H1 (cell line): ENCODE measurements at regions of chr16 and their contacts with region 1.

Region 1: GRCh38 chr16:57648590-57649442 is 19.3 kb upstream of the ADGRG3 start:
- DNase-seq: peak; percentile 65 to 98
- H3K4me3 ChIP-seq: no peak overlapping the region
- H3K27ac ChIP-seq: no peak overlapping the region
- H3K4me1 ChIP-seq: peaks cover 0 to under 1% (median 0%) of the 10 kb centered on the region in 4 experiments; a peak in 3 of 7 replicates
- H3K27me3 ChIP-seq: 0 out of 7 replicates have a peak, but pooled peaks cover 0 to 3% (median 0%) of the 10 kb centered on the region in 4 experiments
- CTCF ChIP-seq: peak; percentile 100
- EP300 ChIP-seq: no peak
- POLR2A ChIP-seq: no peak
- RAD21 ChIP-seq: peak; percentile 99

Region 2: DNA sequence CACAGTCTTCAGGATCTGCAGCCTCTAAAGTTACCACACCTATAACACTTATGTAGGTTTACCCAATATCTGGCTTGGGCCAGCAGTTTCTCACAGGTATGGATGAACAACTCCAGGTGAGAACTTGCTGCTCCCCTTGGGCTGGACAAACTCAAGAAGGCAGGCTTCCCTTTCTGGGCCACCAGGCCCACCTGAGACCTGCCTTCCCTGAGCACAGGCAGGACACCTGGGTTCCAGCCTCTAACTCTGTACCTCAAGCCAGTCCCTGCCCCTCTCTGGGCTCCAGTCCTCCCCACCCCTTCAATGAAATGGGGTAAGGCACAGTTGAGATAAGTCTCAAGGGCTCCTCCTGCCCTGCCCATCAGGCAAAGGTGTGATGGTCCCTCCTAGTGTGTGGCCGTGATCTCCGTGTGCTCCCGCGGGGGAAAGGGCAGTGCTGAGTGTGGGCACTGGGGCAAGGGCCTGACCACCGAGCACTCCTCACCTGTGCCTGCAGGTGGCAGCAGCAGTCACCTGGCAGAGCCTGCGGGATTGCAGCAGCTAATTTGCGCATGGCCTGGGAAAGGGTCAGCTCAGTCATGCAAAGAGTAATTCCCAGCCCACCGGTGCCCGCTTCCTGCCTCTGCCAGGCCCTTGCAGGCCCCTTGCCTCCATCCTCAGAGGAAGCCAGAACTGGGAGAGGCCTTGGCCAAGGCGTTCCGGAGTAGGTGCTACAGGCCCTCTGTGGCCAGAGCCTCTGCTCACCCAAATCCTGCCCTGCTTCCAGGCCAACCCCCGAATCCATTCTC is 48.6 kb before region 1 on chr16:
- CTCF ChIA-PET with region 1: interaction called, 122 read pairs
- POLR2A ChIA-PET with region 1: no interaction called
- DNase-seq: peak; percentile 59 to 87
- H3K4me3 ChIP-seq: no peak overlapping the region
- H3K27ac ChIP-seq: no peak overlapping the region
- H3K4me1 ChIP-seq: no peaks in the 10 kb centered on the region; a peak in 1 of 7 replicates
- H3K27me3 ChIP-seq: no peaks in the 10 kb centered on the region; a peak in 1 of 7 replicates
- CTCF ChIP-seq: peak; percentile 95 to 100 (median 99)
- EP300 ChIP-seq: no peak
- POLR2A ChIP-seq: no peak
- RAD21 ChIP-seq: peak; percentile 81 to 86

Region 3: GRCh38 chr16:57619832-57620636 is 28.8 kb before region 1 on chr16:
- CTCF ChIA-PET with region 1: interaction called, 36 read pairs
- POLR2A ChIA-PET with region 1: interaction called, 3 read pairs
- DNase-seq: peak in 1 of 2 experiments; percentile 44
- H3K4me3 ChIP-seq: no peak overlapping the region
- H3K27ac ChIP-seq: no peak overlapping the region
- H3K4me1 ChIP-seq: peaks cover 0 to 29% (median 15%) of the 10 kb centered on the region in 4 experiments; a peak in 6 of 7 replicates
- H3K27me3 ChIP-seq: no peaks in the 10 kb centered on the region
- CTCF ChIP-seq: no peak
- EP300 ChIP-seq: no peak
- POLR2A ChIP-seq: no peak
- RAD21 ChIP-seq: no peak

Region 4: GRCh38 chr16:57660715-57661463 is 12.1 kb after region 1 on chr16:
- CTCF ChIA-PET with region 1: interaction called, 44 read pairs
- POLR2A ChIA-PET with region 1: no interaction called
- DNase-seq: no peak
- H3K4me3 ChIP-seq: no peak overlapping the region
- H3K27ac ChIP-seq: no peak overlapping the region
- H3K4me1 ChIP-seq: no peaks in the 10 kb centered on the region; a peak in 1 of 7 replicates
- H3K27me3 ChIP-seq: no peaks in the 10 kb centered on the region
- CTCF ChIP-seq: peak in 1 of 3 experiments; percentile 4; a peak in 1 of 4 replicates
- EP300 ChIP-seq: no peak
- POLR2A ChIP-seq: no peak
- RAD21 ChIP-seq: peak; percentile 19 to 48; a peak in 3 of 4 replicates

Region 5: GRCh38 chr16:57675741-57676584 is 27.1 kb after region 1 on chr16:
- CTCF ChIA-PET with region 1: interaction called, 30 read pairs
- POLR2A ChIA-PET with region 1: no interaction called
- DNase-seq: peak; percentile 13 to 58
- H3K4me3 ChIP-seq: peak overlapping the region in 1 of 4 experiments; percentile 0; a peak in 1 of 8 replicates
- H3K27ac ChIP-seq: no peak overlapping the region
- H3K4me1 ChIP-seq: peaks cover 3 to 16% (median 11%) of the 10 kb centered on the region in 4 experiments
- H3K27me3 ChIP-seq: no peaks in the 10 kb centered on the region; a peak in 1 of 7 replicates
- CTCF ChIP-seq: no peak
- EP300 ChIP-seq: no peak
- POLR2A ChIP-seq: no peak
- RAD21 ChIP-seq: no peak

Region 6: GRCh38 chr16:57723170-57723569 is 74.4 kb after region 1 on chr16:
- CTCF ChIA-PET with region 1: interaction called, 48 read pairs
- POLR2A ChIA-PET with region 1: no interaction called
- DNase-seq: peak in 1 of 2 experiments; percentile 77
- H3K4me3 ChIP-seq: no peak overlapping the region
- H3K27ac ChIP-seq: no peak overlapping the region
- H3K4me1 ChIP-seq: no peaks in the 10 kb centered on the region
- H3K27me3 ChIP-seq: no peaks in the 10 kb centered on the region; a peak in 1 of 7 replicates
- CTCF ChIP-seq: peak; percentile 58 to 81 (median 67)
- EP300 ChIP-seq: no peak
- POLR2A ChIP-seq: no peak
- RAD21 ChIP-seq: peak; percentile 73 to 85

Region 7: GRCh38 chr16:57810197-57811031 is 161.6 kb after region 1 on chr16:
- CTCF ChIA-PET with region 1: no interaction called
- POLR2A ChIA-PET with region 1: no interaction called
- DNase-seq: no peak
- H3K4me3 ChIP-seq: no peak overlapping the region
- H3K27ac ChIP-seq: no peak overlapping the region
- H3K4me1 ChIP-seq: peaks cover 1 to 19% (median 10%) of the 10 kb centered on the region in 4 experiments; a peak in 5 of 7 replicates
- H3K27me3 ChIP-seq: peaks cover 0 to 2% (median 0%) of the 10 kb centered on the region in 4 experiments; a peak in 3 of 7 replicates
- CTCF ChIP-seq: no peak
- EP300 ChIP-seq: no peak
- POLR2A ChIP-seq: 0 out of 3 replicates have a peak, but pooled peaks of 1 of the 2 experiments have one; percentile 15
- RAD21 ChIP-seq: no peak